ENCODE measurements at regions of chr5 and their contacts with region 1.

Region 1: GRCh38 chr5:95961617-95962474 is at the start of gene ELL2:
- DNase-seq: peak; percentile 89
- ATAC-seq: peak; percentile 78
- H3K4me3 ChIP-seq: peak within 1 kb of the TSS; percentile 86
- H3K27ac ChIP-seq: peak within 1 kb of the TSS; percentile 95
- H3K4me1 ChIP-seq: 0 out of 2 replicates have a peak, but pooled peaks cover 3% of the 10 kb centered on the region
- H3K27me3 ChIP-seq: no peaks in the 10 kb centered on the region
- CTCF ChIP-seq: no peak
- EP300 ChIP-seq: no peak
- POLR2A ChIP-seq: peak; percentile 79
- RAD21 ChIP-seq: no peak
- polyA plus RNA-seq, gene ELL2: 24.2 to 34.4 TPM

Region 2: DNA sequence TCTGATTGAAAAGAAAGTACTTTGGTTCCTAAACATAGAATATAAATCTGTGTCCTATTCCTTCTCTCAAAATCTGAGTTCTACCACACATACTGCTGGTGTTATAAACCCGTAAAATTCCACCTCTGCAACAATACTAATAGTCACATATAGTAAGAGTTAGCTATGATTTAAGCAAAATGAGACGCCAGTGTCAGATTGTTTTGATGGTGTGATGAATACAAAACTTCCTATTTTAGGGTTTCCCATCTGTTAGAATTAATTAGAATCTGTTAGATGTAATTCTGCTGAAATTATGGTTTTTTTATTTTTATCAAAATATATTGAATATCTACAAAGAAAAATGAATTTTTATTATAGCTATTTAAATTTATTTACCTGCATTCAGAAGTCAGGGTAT is 380.3 kb before region 1 on chr5:
- CTCF ChIA-PET with region 1: no interaction called
- POLR2A ChIA-PET with region 1: no interaction called
- RAD21 ChIA-PET with region 1: no interaction called
- SMC1A ChIA-PET with region 1: no interaction called
- in situ Hi-C with region 1: no loop called
- intact Hi-C with region 1: no loop called
- DNase-seq: no peak
- ATAC-seq: no peak
- H3K4me3 ChIP-seq: no peak overlapping the region
- H3K27ac ChIP-seq: no peak overlapping the region
- H3K4me1 ChIP-seq: no peaks in the 10 kb centered on the region
- H3K27me3 ChIP-seq: no peaks in the 10 kb centered on the region
- CTCF ChIP-seq: no peak
- EP300 ChIP-seq: no peak
- POLR2A ChIP-seq: no peak
- RAD21 ChIP-seq: no peak

Region 3: DNA sequence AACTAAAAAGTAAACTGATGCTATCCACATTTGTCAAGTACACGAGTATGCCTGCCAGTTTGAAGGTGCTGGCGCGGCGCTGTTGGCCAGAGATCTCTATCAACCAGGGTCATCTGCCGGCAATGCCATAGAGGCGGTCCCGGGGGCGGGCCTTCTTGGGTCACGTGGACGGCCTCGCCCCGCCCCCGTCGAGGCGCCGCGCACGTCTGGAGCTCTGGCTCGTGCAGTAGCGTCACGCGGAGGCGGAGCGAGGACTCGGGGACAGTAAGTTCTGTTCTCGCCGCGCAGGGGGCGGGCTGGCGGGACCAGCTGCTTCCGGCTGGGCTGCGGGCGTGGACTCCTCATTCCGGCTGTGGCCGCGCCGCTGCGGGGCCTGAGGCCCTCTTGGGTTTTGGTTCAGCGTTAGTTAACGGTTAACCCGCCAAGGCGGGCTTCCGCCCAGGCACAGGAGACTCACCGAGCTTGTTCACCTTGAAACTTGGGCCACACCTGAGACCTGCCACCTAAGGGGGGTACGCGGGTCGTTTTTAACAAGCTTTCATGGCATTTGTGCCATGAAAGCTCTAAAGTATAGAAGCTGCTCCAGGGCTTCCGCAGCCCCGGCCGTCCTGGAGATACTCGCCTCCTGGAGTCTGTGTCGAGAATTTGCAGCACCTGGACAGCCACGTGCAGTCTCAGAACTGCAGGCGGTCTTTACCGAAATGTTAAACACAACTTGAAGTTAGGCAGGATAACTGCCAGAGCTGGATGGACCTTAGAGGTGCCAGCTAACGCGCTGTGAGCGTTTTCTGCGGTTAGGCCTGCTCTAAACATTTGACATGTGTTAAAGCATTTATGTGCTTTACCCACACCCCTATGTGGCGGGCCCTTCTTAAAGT is 315.1 kb before region 1 on chr5 and contains the start of gene RFESD:
- CTCF ChIA-PET with region 1: interaction called, 3 read pairs
- POLR2A ChIA-PET with region 1: no interaction called
- RAD21 ChIA-PET with region 1: no interaction called
- SMC1A ChIA-PET with region 1: no interaction called
- in situ Hi-C with region 1: no loop called
- intact Hi-C with region 1: loop called (anchors 10 kb)
- DNase-seq: peak; percentile 83
- ATAC-seq: peak; percentile 97
- H3K4me3 ChIP-seq: peak within 1 kb of the TSS; percentile 75
- H3K27ac ChIP-seq: peak within 1 kb of the TSS; percentile 80
- H3K4me1 ChIP-seq: peaks cover 5% of the 10 kb centered on the region
- H3K27me3 ChIP-seq: no peaks in the 10 kb centered on the region
- CTCF ChIP-seq: peak in 2 of 3 experiments; percentile 2 to 9; a peak in 1 of 6 replicates
- EP300 ChIP-seq: no peak
- POLR2A ChIP-seq: peak; percentile 88
- RAD21 ChIP-seq: 0 out of 2 replicates have a peak, but pooled peaks have one; percentile 1
- polyA plus RNA-seq, gene RFESD: 14.0 to 14.7 TPM

Region 4: GRCh38 chr5:95746722-95747679 is 214.8 kb before region 1 on chr5:
- CTCF ChIA-PET with region 1: no interaction called
- POLR2A ChIA-PET with region 1: no interaction called
- RAD21 ChIA-PET with region 1: no interaction called
- SMC1A ChIA-PET with region 1: no interaction called
- in situ Hi-C with region 1: no loop called
- intact Hi-C with region 1: no loop called
- DNase-seq: no peak
- ATAC-seq: peak; percentile 20; the same call in 2 of the 3 replicates
- H3K4me3 ChIP-seq: no peak overlapping the region
- H3K27ac ChIP-seq: no peak overlapping the region
- H3K4me1 ChIP-seq: no peaks in the 10 kb centered on the region
- H3K27me3 ChIP-seq: no peaks in the 10 kb centered on the region
- CTCF ChIP-seq: no peak
- EP300 ChIP-seq: no peak
- POLR2A ChIP-seq: no peak
- RAD21 ChIP-seq: no peak

Region 5: DNA sequence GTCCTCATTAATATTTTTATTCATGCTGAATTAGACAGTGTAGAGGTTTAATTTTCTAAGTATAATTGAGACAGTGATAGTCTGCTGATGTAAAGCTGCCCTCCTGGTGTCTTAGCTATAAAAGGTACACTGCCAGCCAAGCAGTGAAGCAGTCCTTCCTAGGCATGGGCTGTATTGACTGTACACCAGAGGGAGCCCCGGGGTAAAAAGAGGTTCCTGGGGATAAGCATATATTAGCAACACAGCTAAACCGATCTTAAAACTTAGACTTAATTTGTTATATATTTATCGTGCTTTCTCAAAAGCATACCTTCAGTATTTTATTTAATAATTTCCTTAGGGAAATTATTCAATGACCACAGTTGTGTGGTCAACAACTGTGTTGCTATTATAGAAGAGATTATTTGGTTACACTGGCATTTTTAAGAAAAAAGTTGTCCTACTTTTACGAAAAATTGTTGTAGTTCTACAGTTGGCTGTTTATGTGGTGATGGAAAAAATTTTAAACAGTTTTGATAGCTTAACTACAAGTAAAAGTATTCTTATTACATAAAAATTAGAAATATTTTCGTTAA is 69.0 kb before region 1 on chr5:
- CTCF ChIA-PET with region 1: interaction called, 15 read pairs
- POLR2A ChIA-PET with region 1: interaction called, 3 read pairs
- RAD21 ChIA-PET with region 1: interaction called, 10 read pairs
- SMC1A ChIA-PET with region 1: interaction called, 31 read pairs
- in situ Hi-C with region 1: no loop called
- intact Hi-C with region 1: loop called (anchors 2 kb)
- DNase-seq: no peak
- ATAC-seq: peak; percentile 94
- H3K4me3 ChIP-seq: no peak overlapping the region
- H3K27ac ChIP-seq: no peak overlapping the region
- H3K4me1 ChIP-seq: no peaks in the 10 kb centered on the region
- H3K27me3 ChIP-seq: no peaks in the 10 kb centered on the region
- CTCF ChIP-seq: peak; percentile 57 to 62 (median 57)
- EP300 ChIP-seq: no peak
- POLR2A ChIP-seq: no peak
- RAD21 ChIP-seq: peak; percentile 81

Region 6: DNA sequence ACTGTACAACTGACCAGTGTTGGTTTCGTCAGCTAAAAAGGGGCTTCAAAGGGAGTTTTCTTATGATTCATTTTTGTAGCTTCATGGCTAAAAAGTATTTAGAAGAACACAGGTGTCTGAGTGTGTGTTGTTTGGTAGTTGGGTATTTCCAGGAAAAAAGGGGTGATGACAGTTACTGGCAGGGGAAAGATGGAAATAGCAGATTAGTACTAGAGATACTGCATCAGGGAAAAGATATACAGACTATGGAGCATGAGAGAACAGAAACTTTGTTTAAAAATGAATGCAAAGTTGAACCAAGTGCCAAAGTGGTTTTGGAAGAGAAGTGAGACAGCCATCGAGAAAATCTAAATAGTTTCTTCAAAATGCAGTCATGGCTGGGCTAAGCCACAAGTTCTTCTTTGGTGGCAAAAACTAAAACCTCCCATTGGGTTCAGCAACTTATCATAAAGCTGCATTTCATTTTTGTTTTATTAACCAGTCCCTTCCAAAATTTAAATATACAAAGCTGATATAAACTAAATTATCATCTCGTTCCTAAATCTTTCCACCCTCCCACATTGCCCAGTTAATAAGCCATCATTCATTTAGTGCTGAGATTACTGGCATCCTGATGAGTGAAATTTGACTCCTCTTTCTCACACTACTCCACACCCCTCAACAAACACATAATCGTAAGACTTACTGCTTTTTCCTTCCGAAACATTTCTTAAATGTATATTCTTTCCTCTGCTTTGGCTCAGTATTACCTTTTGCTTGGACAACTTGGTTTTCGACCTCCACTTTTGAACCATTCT is 33.7 kb before region 1 on chr5:
- CTCF ChIA-PET with region 1: interaction called, 54 read pairs
- POLR2A ChIA-PET with region 1: interaction called, 18 read pairs
- RAD21 ChIA-PET with region 1: interaction called, 42 read pairs
- SMC1A ChIA-PET with region 1: interaction called, 62 read pairs
- in situ Hi-C with region 1: no loop called
- intact Hi-C with region 1: loop called (anchors 1 kb)
- DNase-seq: peak; percentile 91
- ATAC-seq: peak; percentile 61
- H3K4me3 ChIP-seq: peak overlapping the region; percentile 22
- H3K27ac ChIP-seq: peak overlapping the region; percentile 91
- H3K4me1 ChIP-seq: peaks cover 65% of the 10 kb centered on the region
- H3K27me3 ChIP-seq: no peaks in the 10 kb centered on the region
- CTCF ChIP-seq: no peak
- EP300 ChIP-seq: peak; percentile 95 to 97
- POLR2A ChIP-seq: no peak
- RAD21 ChIP-seq: 0 out of 2 replicates have a peak, but pooled peaks have one; percentile 12

Region 7: DNA sequence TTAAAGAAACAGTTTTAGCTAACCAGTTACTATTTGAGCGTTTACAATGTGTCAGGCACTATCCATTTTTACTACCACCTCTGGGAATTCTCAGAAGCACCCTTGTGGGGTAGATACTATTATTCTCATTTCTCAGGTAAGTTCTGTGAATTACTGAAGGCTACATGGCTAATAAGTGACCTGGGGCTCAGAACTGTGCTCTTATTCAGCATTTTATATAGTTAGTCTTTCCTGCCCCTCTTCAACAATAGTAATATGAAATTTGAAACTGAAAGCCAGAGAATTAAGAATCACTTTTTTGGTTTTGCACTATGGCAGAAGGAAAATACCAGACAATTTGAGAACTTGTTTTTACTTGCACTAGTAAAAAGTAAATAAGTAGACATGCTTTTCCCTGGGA is 12.0 kb before region 1 on chr5:
- CTCF ChIA-PET with region 1: interaction called, 61 read pairs
- POLR2A ChIA-PET with region 1: interaction called, 13 read pairs
- RAD21 ChIA-PET with region 1: interaction called, 46 read pairs
- SMC1A ChIA-PET with region 1: interaction called, 71 read pairs
- in situ Hi-C with region 1: no loop called
- intact Hi-C with region 1: no loop called
- DNase-seq: no peak
- ATAC-seq: peak; percentile 68
- H3K4me3 ChIP-seq: peak overlapping the region; percentile 15; the same call in 1 of the 2 replicates
- H3K27ac ChIP-seq: peak overlapping the region; percentile 67
- H3K4me1 ChIP-seq: peaks cover 18% of the 10 kb centered on the region; the same call in 1 of the 2 replicates
- H3K27me3 ChIP-seq: no peaks in the 10 kb centered on the region
- CTCF ChIP-seq: no peak
- EP300 ChIP-seq: no peak
- POLR2A ChIP-seq: no peak
- RAD21 ChIP-seq: no peak

Region 8: DNA sequence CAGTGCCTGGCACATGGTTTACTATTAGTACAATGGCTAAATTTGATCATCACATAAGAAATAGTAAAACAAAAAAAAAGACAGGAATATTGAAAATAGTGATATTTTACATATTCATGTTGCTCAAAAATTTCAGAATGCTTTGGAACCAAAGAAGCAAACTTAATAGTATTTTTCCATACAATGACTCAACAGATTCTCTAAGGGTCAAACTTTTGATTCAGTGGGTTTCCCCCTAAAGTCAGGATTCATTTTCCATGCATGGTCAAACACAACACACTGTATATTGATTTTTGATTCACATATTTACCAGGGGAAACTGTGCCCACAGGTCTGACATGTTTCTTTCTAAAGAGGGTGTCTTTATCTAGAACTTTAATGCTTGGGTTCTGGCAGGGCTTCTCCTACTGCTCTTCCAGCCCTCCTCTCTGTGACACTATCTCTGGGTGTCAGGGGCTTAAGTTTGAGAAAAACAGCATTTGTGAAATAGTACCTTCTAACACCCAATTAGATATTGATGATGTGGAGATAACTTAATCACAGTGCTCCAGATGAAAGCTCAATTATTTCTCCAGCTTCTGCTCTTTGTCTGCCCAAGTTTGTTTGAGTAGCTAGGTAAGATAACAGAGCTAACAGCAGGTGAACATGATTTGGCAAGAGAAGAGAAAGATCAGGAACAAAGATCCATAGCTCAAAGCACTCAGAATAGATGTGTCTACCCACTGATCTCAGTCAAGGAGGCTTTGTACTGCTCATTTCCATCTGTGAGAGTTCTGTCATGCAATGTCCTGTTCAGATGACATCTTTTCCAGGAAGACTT is 35.3 kb after region 1 on chr5:
- CTCF ChIA-PET with region 1: no interaction called
- POLR2A ChIA-PET with region 1: no interaction called
- RAD21 ChIA-PET with region 1: no interaction called
- SMC1A ChIA-PET with region 1: no interaction called
- in situ Hi-C with region 1: no loop called
- intact Hi-C with region 1: no loop called
- DNase-seq: no peak
- ATAC-seq: no peak
- H3K4me3 ChIP-seq: no peak overlapping the region
- H3K27ac ChIP-seq: no peak overlapping the region
- H3K4me1 ChIP-seq: no peaks in the 10 kb centered on the region
- H3K27me3 ChIP-seq: no peaks in the 10 kb centered on the region
- CTCF ChIP-seq: no peak
- EP300 ChIP-seq: no peak
- POLR2A ChIP-seq: no peak
- RAD21 ChIP-seq: no peak

Region 9: DNA sequence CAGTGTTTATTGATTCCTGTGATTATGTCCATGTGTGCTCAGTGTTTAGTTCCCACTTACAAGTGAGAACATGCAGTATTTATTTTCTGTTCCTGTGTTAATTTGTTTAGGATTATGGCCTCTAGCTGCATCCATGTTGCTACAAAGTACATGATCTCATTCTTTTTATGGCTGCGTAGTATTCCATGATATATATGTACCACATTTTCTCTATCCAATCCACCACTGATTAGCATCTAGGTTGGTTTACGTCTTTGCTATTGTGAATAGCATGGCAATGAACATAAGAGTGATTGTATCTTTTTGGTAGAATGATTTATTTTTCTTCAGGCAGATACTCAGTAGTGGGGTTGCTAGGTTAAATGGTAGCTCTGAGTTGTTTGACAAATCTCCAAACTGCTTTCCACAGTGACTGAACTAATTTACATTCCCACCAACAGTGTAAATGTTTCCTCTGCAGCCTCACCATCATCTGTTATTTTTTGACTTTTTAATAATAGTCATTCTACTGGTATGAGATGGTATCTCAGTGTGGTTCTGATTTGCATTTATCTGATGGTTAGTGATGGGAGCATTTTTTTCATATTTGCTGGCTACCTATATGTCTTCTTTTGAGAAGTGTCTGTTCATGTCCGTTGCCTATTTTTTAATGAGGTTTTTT is 47.3 kb after region 1 on chr5:
- CTCF ChIA-PET with region 1: no interaction called
- POLR2A ChIA-PET with region 1: no interaction called
- RAD21 ChIA-PET with region 1: no interaction called
- SMC1A ChIA-PET with region 1: no interaction called
- in situ Hi-C with region 1: no loop called
- intact Hi-C with region 1: no loop called
- DNase-seq: no peak
- ATAC-seq: no peak
- H3K4me3 ChIP-seq: no peak overlapping the region
- H3K27ac ChIP-seq: no peak overlapping the region
- H3K4me1 ChIP-seq: no peaks in the 10 kb centered on the region
- H3K27me3 ChIP-seq: no peaks in the 10 kb centered on the region
- CTCF ChIP-seq: no peak
- EP300 ChIP-seq: no peak
- POLR2A ChIP-seq: no peak
- RAD21 ChIP-seq: no peak

Region 10: DNA sequence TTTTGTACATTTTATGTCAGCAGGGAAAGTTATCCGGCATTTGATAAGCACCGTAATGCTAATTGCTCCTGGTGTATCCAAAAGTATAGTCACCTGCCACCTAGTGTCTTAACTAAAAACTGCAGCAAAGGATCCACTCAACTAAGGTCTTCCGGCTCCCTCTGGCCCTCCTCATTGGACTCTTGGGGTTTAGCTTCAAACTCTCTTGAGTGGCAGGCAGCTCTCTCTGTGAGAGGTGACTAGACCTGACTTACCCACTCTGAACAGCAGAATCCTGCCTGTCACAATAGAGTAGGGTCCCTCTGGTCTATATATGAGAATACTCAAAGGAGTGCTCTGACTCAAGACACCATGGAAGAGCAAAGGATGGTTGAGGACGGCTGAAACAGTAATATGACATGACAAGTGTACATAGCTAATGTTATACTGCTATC is 640.0 kb after region 1 on chr5:
- CTCF ChIA-PET with region 1: no interaction called
- POLR2A ChIA-PET with region 1: no interaction called
- RAD21 ChIA-PET with region 1: no interaction called
- SMC1A ChIA-PET with region 1: no interaction called
- in situ Hi-C with region 1: no loop called
- intact Hi-C with region 1: loop called (anchors 10 kb)
- DNase-seq: peak; percentile 16
- ATAC-seq: peak; percentile 96
- H3K4me3 ChIP-seq: no peak overlapping the region
- H3K27ac ChIP-seq: no peak overlapping the region
- H3K4me1 ChIP-seq: no peaks in the 10 kb centered on the region
- H3K27me3 ChIP-seq: no peaks in the 10 kb centered on the region
- CTCF ChIP-seq: peak; percentile 71 to 83 (median 77)
- EP300 ChIP-seq: no peak
- POLR2A ChIP-seq: no peak
- RAD21 ChIP-seq: peak; percentile 62